Activated CD4-positive, alpha-beta T cell treated with anti-CD3 and anti-CD28 coated beads for 36 hours (primary cell): ENCODE measurements at regions of chr3 and their contacts with region 1.

Region 1: GRCh38 chr3:153043729-153044328 is 118.2 kb upstream of the RAP2B start:
- DNase-seq: no peak
- ATAC-seq: no peak
- H3K4me3 Mint-ChIP-seq: peak overlapping the region; percentile 32
- H3K27ac Mint-ChIP-seq: no peak overlapping the region
- H3K4me1 Mint-ChIP-seq: peaks cover 3% of the 10 kb centered on the region
- H3K27me3 Mint-ChIP-seq: peaks cover 2% of the 10 kb centered on the region

Region 2: GRCh38 chr3:153221748-153222162 is 177.9 kb after region 1 on chr3:
- CTCF ChIA-PET with region 1: no interaction called
- POLR2A ChIA-PET with region 1: no interaction called
- intact Hi-C with region 1: loop called in 1 of 2 experiments (anchors 5 kb)
- DNase-seq: peak; percentile 68
- ATAC-seq: peak; percentile 97
- H3K4me3 Mint-ChIP-seq: peak overlapping the region; percentile 58
- H3K27ac Mint-ChIP-seq: peak overlapping the region; percentile 88
- H3K4me1 Mint-ChIP-seq: peaks cover 59% of the 10 kb centered on the region
- H3K27me3 Mint-ChIP-seq: no peaks in the 10 kb centered on the region

Region 3: GRCh38 chr3:153285194-153285641 is 241.4 kb after region 1 on chr3:
- CTCF ChIA-PET with region 1: interaction called, 5 read pairs
- POLR2A ChIA-PET with region 1: no interaction called
- intact Hi-C with region 1: loop called (anchors 2 kb)
- DNase-seq: no peak
- ATAC-seq: no peak
- H3K4me3 Mint-ChIP-seq: no peak overlapping the region
- H3K27ac Mint-ChIP-seq: peak overlapping the region; percentile 16
- H3K4me1 Mint-ChIP-seq: peaks cover 43% of the 10 kb centered on the region
- H3K27me3 Mint-ChIP-seq: no peaks in the 10 kb centered on the region

Region 4: DNA sequence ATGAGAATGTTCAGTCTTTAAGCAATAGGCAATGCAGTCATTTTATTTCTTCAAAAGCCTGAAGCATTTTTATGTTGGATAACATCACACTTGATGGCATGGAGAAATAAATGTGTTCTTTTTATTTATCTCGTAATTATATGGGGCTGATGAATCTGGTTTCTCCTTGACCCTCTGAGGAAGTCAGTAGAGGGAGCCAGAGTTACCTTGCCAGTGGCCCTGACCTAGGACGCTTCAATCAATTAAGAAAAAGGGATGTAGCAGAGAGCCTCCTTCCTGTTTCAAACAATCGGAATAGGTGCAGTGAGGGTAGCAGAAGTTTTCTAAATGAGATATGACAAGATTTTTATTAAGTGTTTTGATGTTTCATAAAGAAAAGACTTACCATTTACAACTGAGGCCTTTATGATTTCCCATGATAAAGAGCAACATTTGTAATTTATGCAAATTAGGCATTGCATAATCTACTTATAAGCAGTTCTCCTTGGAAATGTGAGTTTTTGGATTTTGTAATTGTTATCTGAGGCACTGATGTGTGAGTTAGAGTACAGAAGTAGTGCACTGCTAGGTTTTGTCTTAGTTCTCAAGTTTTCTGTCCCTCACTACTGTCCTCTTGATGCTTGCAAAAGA is 247.3 kb after region 1 on chr3:
- CTCF ChIA-PET with region 1: interaction called, 5 read pairs
- POLR2A ChIA-PET with region 1: no interaction called
- intact Hi-C with region 1: loop called (anchors 2 kb)
- DNase-seq: no peak
- ATAC-seq: peak; percentile 30
- H3K4me3 Mint-ChIP-seq: no peak overlapping the region
- H3K27ac Mint-ChIP-seq: no peak overlapping the region
- H3K4me1 Mint-ChIP-seq: peaks cover 39% of the 10 kb centered on the region
- H3K27me3 Mint-ChIP-seq: no peaks in the 10 kb centered on the region

Region 5: DNA sequence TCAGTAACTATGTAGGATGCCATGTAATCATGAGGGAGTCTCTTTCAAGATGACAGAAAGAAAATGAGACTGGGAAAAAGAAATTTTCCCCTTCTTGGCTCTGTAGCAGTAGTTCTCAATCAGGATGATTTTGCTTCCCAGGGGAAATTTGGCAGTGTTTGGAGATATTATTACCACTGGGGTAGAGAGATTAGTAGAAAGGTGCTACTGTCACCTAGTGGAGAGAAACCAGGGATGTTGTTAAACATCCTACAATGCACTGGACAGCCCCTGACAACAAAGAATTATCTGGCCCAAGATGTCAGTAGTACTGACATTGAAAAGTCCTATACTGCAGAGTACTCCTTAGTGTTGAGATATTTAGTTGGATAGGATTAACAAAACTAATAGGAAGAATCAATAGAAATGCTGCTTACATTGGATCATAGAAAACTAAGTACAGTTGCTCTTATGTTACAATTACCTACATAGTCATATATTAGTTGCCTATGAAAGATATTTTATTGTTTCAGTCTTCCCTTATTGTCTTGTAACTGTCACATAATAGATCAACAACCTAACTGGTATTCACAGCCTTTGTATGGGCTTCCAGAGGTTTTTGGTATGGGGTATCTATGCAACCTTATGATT is 551.5 kb after region 1 on chr3:
- CTCF ChIA-PET with region 1: interaction called, 7 read pairs
- POLR2A ChIA-PET with region 1: interaction called, 3 read pairs
- intact Hi-C with region 1: loop called (anchors 2 kb)
- DNase-seq: no peak
- ATAC-seq: no peak
- H3K4me3 Mint-ChIP-seq: no peak overlapping the region
- H3K27ac Mint-ChIP-seq: no peak overlapping the region
- H3K4me1 Mint-ChIP-seq: no peaks in the 10 kb centered on the region
- H3K27me3 Mint-ChIP-seq: no peaks in the 10 kb centered on the region

Region 6: DNA sequence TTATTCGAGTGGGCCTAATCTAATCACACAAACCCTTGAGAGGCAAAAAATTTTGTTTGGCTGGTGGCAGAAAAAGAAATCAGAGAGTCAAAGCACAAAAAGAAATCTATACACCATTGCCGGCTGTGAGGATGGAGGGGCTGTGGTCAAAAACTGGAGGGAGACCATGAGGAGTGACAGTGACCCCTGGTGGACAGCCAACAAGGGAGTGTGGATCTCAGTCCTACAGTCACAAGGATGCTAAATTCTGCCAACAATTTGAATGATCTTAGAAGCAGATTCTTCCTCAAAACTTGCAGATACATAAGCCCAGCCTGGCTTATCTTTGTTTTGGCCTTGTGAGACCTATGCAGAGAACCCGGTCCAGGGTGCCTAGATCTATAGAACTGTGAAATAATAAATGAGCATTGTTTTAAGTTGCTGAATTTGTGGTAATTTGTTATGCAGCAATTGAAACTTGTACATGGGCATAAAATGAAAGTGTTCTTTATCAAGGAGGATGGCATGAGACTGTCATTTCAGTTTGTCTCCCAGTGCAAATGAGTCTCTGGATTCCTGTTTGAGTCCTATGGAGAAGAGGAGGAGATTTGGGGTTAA is 974.4 kb after region 1 on chr3:
- CTCF ChIA-PET with region 1: no interaction called
- POLR2A ChIA-PET with region 1: no interaction called
- intact Hi-C with region 1: loop called in 1 of 2 experiments (anchors 5 kb)
- DNase-seq: peak; percentile 57
- ATAC-seq: no peak
- H3K4me3 Mint-ChIP-seq: no peak overlapping the region
- H3K27ac Mint-ChIP-seq: no peak overlapping the region
- H3K4me1 Mint-ChIP-seq: no peaks in the 10 kb centered on the region
- H3K27me3 Mint-ChIP-seq: peaks cover 4% of the 10 kb centered on the region